GM18951 (cell line): ENCODE measurements at regions of chr7 and their contacts with region 1.

Region 1: GRCh38 chr7:5679813-5680473 is 101.5 kb downstream of the RNF216 start:
- POLR2A ChIP-seq: no peak

Region 2: GRCh38 chr7:5494683-5495561 is 185.0 kb before region 1 on chr7:
- in situ Hi-C with region 1: loop called (anchors 10 kb)
- POLR2A ChIP-seq: peak; percentile 22